ENCODE measurements at regions of chr1 and their contacts with region 1.

Region 1: GRCh38 chr1:21013510-21013909 is 163.2 kb downstream of the EIF4G3 start:
- DNase-seq: no peak
- H3K4me3 ChIP-seq: no peak overlapping the region
- H3K27ac ChIP-seq: no peak overlapping the region
- H3K4me1 ChIP-seq: no peaks in the 10 kb centered on the region
- H3K27me3 ChIP-seq: no peaks in the 10 kb centered on the region
- CTCF ChIP-seq: no peak

Region 2: DNA sequence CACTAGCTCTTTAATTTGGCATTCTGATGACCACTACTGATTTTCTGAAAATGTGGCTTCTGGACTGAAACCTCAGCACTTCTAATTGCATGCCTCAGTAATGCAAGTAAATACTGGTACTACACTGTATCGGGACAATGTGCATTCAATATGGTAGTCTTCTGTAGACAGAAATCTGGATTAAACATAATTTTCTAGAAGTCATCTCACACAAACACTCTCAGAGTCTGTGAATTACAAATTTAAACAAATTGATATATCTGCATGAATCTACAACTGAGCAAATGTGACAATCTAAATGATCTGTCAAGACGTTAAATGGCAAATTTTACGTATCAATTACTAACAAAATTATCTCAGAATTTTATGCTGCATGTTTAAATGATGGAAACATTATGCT is 250.1 kb before region 1 on chr1:
- CTCF ChIA-PET with region 1: no interaction called
- POLR2A ChIA-PET with region 1: interaction called, 21 read pairs
- intact Hi-C with region 1: no loop called
- DNase-seq: no peak
- H3K4me3 ChIP-seq: no peak overlapping the region
- H3K27ac ChIP-seq: no peak overlapping the region
- H3K4me1 ChIP-seq: no peaks in the 10 kb centered on the region
- H3K27me3 ChIP-seq: no peaks in the 10 kb centered on the region
- CTCF ChIP-seq: no peak

Measured in PC-9 (cell line).